PC-3 (cell line): ENCODE measurements at regions of chr7 and their contacts with region 1.

Region 1: GRCh38 chr7:95527033-95527775 is 41.5 kb downstream of the ASB4 start:
- DNase-seq: peak; percentile 65
- ATAC-seq: peak; percentile 70
- H3K4me3 ChIP-seq: no peak overlapping the region
- H3K27ac ChIP-seq: no peak overlapping the region
- H3K4me1 ChIP-seq: 0 out of 2 replicates have a peak, but pooled peaks cover 4% of the 10 kb centered on the region
- H3K27me3 ChIP-seq: peaks cover 21% of the 10 kb centered on the region
- CTCF ChIP-seq: peak; percentile 95

Region 2: GRCh38 chr7:95434557-95435421 is 92.4 kb before region 1 on chr7 and contains the start of gene PON2:
- CTCF ChIA-PET with region 1: no interaction called
- POLR2A ChIA-PET with region 1: no interaction called
- intact Hi-C with region 1: no loop called
- DNase-seq: peak; percentile 85
- ATAC-seq: peak; percentile 99
- H3K4me3 ChIP-seq: peak within 1 kb of the TSS; percentile 90
- H3K27ac ChIP-seq: peak within 1 kb of the TSS; percentile 79
- H3K4me1 ChIP-seq: peaks cover 23% of the 10 kb centered on the region
- H3K27me3 ChIP-seq: no peaks in the 10 kb centered on the region
- CTCF ChIP-seq: no peak
- total RNA-seq, gene PON2: 51.6 and 56.4 TPM in 2 replicates

Region 3: GRCh38 chr7:95684037-95684436 is 156.8 kb after region 1 on chr7:
- CTCF ChIA-PET with region 1: interaction called, 21 read pairs
- POLR2A ChIA-PET with region 1: no interaction called
- intact Hi-C with region 1: loop called (anchors 1 kb)
- DNase-seq: peak; percentile 61
- ATAC-seq: peak; percentile 66
- H3K4me3 ChIP-seq: no peak overlapping the region
- H3K27ac ChIP-seq: no peak overlapping the region
- H3K4me1 ChIP-seq: 0 out of 2 replicates have a peak, but pooled peaks cover 5% of the 10 kb centered on the region
- H3K27me3 ChIP-seq: no peaks in the 10 kb centered on the region
- CTCF ChIP-seq: peak; percentile 63